ENCODE measurements at regions of chr3 and their contacts with region 1.

Region 1: GRCh38 chr3:137013955-137014688 is 56.3 kb downstream of the IL20RB start:
- DNase-seq: peak; percentile 77 to 88 (median 80)
- ATAC-seq: peak; percentile 93
- H3K4me3 ChIP-seq: peak overlapping the region; percentile 36
- H3K27ac ChIP-seq: peak overlapping the region; percentile 82
- H3K4me1 ChIP-seq: peaks cover 4 to 7% of the 10 kb centered on the region in 2 experiments; a peak in 3 of 5 replicates
- H3K27me3 ChIP-seq: no peaks in the 10 kb centered on the region
- CTCF ChIP-seq: peak; percentile 79 to 87 (median 81)
- EP300 ChIP-seq: no peak
- POLR2A ChIP-seq: peak; percentile 46; the same call in 1 of the 2 replicates
- RAD21 ChIP-seq: peak; percentile 83 to 88

Region 2: GRCh38 chr3:136385457-136385856 is 628.7 kb before region 1 on chr3:
- CTCF ChIA-PET with region 1: no interaction called
- POLR2A ChIA-PET with region 1: no interaction called
- in situ Hi-C with region 1: loop called (anchors 25 kb)
- intact Hi-C with region 1: loop called (anchors 5 kb)
- DNase-seq: no peak
- ATAC-seq: no peak
- H3K4me3 ChIP-seq: no peak overlapping the region
- H3K27ac ChIP-seq: no peak overlapping the region
- H3K4me1 ChIP-seq: no peaks in the 10 kb centered on the region
- H3K27me3 ChIP-seq: no peaks in the 10 kb centered on the region
- CTCF ChIP-seq: no peak
- EP300 ChIP-seq: no peak
- POLR2A ChIP-seq: no peak
- RAD21 ChIP-seq: no peak

Region 3: GRCh38 chr3:136545664-136546268 is 468.4 kb before region 1 on chr3:
- CTCF ChIA-PET with region 1: interaction called, 3 read pairs
- POLR2A ChIA-PET with region 1: no interaction called
- in situ Hi-C with region 1: loop called (anchors 25 kb)
- intact Hi-C with region 1: loop called (anchors 5 kb)
- DNase-seq: peak in 2 of 4 experiments; percentile 2 to 3
- ATAC-seq: no peak
- H3K4me3 ChIP-seq: no peak overlapping the region
- H3K27ac ChIP-seq: no peak overlapping the region
- H3K4me1 ChIP-seq: no peaks in the 10 kb centered on the region
- H3K27me3 ChIP-seq: no peaks in the 10 kb centered on the region
- CTCF ChIP-seq: peak in 2 of 3 experiments; percentile 20 to 47; a peak in 3 of 6 replicates
- EP300 ChIP-seq: no peak
- POLR2A ChIP-seq: no peak
- RAD21 ChIP-seq: peak; percentile 40 to 63

Region 4: GRCh38 chr3:136818769-136819391 is 195.2 kb before region 1 on chr3 and contains the start of gene SLC35G2:
- CTCF ChIA-PET with region 1: no interaction called
- POLR2A ChIA-PET with region 1: no interaction called
- in situ Hi-C with region 1: no loop called
- intact Hi-C with region 1: loop called (anchors 1 kb)
- DNase-seq: peak; percentile 39 to 63 (median 58)
- ATAC-seq: peak; percentile 88
- H3K4me3 ChIP-seq: peak within 1 kb of the TSS; percentile 57
- H3K27ac ChIP-seq: peak within 1 kb of the TSS; percentile 73; the same call in 2 of the 3 replicates
- H3K4me1 ChIP-seq: peaks cover 2 to 17% of the 10 kb centered on the region in 2 experiments; a peak in 4 of 5 replicates
- H3K27me3 ChIP-seq: no peaks in the 10 kb centered on the region
- CTCF ChIP-seq: no peak; a peak in 1 of 6 replicates
- EP300 ChIP-seq: no peak
- POLR2A ChIP-seq: no peak; the same call in 1 of the 2 replicates
- RAD21 ChIP-seq: no peak
- polyA plus RNA-seq, gene SLC35G2: 2.8 to 3.1 TPM

Region 5: DNA sequence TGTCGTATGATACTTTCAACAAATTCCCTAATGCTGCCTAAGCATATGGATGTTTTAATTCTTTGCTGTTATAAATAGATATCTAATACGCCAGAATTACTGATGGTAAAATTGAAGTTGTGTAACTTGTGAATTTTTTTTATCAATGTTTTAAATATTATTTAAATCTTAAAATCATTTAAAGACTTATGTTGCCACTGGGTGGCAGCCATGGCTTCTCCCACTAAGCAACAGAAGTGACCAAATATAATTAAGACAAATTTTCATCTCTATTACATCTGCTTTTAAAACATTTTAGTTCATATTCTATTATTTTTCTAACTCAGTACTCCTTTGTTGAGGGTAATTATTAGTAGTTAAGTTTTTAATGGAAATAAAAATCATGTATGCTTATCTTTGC is 64.4 kb before region 1 on chr3:
- CTCF ChIA-PET with region 1: no interaction called
- POLR2A ChIA-PET with region 1: no interaction called
- in situ Hi-C with region 1: no loop called
- intact Hi-C with region 1: loop called (anchors 1 kb)
- DNase-seq: no peak
- ATAC-seq: no peak
- H3K4me3 ChIP-seq: no peak overlapping the region
- H3K27ac ChIP-seq: no peak overlapping the region
- H3K4me1 ChIP-seq: peaks cover 0 to 2% of the 10 kb centered on the region in 2 experiments; a peak in 2 of 5 replicates
- H3K27me3 ChIP-seq: no peaks in the 10 kb centered on the region
- CTCF ChIP-seq: peak in 1 of 3 experiments; percentile 4; a peak in 1 of 6 replicates
- EP300 ChIP-seq: no peak
- POLR2A ChIP-seq: no peak
- RAD21 ChIP-seq: 0 out of 4 replicates have a peak, but pooled peaks of 1 of the 2 experiments have one; percentile 10